ENCODE measurements at regions of chr1 and their contacts with region 1.

Region 1: GRCh38 chr1:207885129-207886032 is 25.5 kb downstream of the CD34 start:
- DNase-seq: peak; percentile 82
- ATAC-seq: peak; percentile 87
- H3K4me3 ChIP-seq: no peak overlapping the region
- H3K4me3 Mint-ChIP-seq: peak overlapping the region; percentile 36
- H3K27ac ChIP-seq: no peak overlapping the region
- H3K27ac Mint-ChIP-seq: no peak overlapping the region
- H3K4me1 ChIP-seq: peaks cover 15 to 26% of the 10 kb centered on the region in 2 donors
- H3K4me1 Mint-ChIP-seq: peaks cover 35% of the 10 kb centered on the region
- H3K27me3 ChIP-seq: no peaks in the 10 kb centered on the region
- H3K27me3 Mint-ChIP-seq: peaks cover 12% of the 10 kb centered on the region
- CTCF ChIP-seq: peak; percentile 95

Region 2: DNA sequence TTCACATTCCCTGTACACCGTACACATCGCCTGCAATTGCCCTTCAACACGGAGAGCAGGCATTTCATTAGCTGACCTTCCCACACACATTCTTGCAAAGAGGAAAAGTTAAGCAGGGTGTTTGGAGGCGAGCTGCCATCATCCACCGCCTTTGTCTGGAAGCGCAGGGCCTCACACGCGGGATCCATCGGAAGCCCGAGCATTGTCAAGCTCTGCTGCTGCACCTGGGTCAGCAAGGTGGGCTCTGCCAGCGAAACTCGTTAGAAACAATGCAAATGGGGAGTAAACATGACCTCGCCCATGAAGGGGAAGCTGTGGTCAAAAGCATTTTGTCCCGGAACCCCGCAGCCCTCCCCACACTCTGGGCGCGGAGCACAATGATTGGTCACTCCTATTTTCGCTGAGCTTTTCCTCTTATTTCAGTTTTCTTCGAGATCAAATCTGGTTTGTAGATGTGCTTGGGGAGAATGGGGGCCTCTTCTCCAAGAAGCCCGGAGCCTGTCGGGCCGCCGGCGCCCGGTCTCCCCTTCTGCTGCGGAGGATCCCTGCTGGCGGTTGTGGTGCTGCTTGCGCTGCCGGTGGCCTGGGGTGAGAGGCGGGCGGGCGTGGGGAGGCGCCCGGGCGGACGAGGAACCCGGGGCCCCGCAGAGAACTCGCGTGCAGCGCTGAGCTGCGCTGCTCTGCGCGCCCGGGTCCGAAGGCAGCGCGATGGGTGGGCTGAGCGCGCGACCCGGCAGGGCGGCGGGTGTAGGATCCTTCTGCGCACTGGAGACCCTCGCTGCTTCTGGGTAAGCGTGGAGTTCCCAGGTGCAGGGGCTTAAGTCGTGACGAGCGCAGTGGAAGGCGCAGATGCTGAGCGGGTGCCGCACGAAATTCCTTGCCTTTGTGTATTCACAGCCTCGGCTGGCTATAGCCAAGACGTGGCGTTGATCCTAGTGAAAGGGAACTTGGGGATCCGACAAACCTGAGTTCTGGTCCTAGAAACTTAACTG is 389.3 kb before region 1 on chr1 and contains the start of gene CR1:
- CTCF ChIA-PET with region 1: no interaction called
- POLR2A ChIA-PET with region 1: no interaction called
- intact Hi-C with region 1: no loop called
- DNase-seq: peak; percentile 77
- ATAC-seq: peak; percentile 70
- H3K4me3 ChIP-seq: peak within 1 kb of the TSS; percentile 64 to 87 (median 73)
- H3K4me3 Mint-ChIP-seq: peak within 1 kb of the TSS; percentile 98
- H3K27ac ChIP-seq: peak within 1 kb of the TSS; percentile 56 to 62
- H3K27ac Mint-ChIP-seq: peak within 1 kb of the TSS; percentile 96
- H3K4me1 ChIP-seq: peaks cover 41 to 49% of the 10 kb centered on the region in 2 donors
- H3K4me1 Mint-ChIP-seq: peaks cover 41% of the 10 kb centered on the region
- H3K27me3 ChIP-seq: no peaks in the 10 kb centered on the region
- H3K27me3 Mint-ChIP-seq: no peaks in the 10 kb centered on the region
- CTCF ChIP-seq: no peak
- total RNA-seq, gene CR1: 36.7 and 40.0 TPM in 2 replicates

Region 3: GRCh38 chr1:207797229-207797961 is 88.0 kb before region 1 on chr1:
- CTCF ChIA-PET with region 1: interaction called, 15 read pairs
- POLR2A ChIA-PET with region 1: no interaction called
- intact Hi-C with region 1: no loop called
- DNase-seq: peak; percentile 75
- ATAC-seq: peak; percentile 80
- H3K4me3 ChIP-seq: no peak overlapping the region
- H3K4me3 Mint-ChIP-seq: no peak overlapping the region
- H3K27ac ChIP-seq: no peak overlapping the region
- H3K27ac Mint-ChIP-seq: no peak overlapping the region
- H3K4me1 ChIP-seq: peaks cover 16 to 22% of the 10 kb centered on the region in 2 donors
- H3K4me1 Mint-ChIP-seq: peaks cover 33% of the 10 kb centered on the region
- H3K27me3 ChIP-seq: no peaks in the 10 kb centered on the region
- H3K27me3 Mint-ChIP-seq: no peaks in the 10 kb centered on the region
- CTCF ChIP-seq: peak; percentile 83

Region 4: DNA sequence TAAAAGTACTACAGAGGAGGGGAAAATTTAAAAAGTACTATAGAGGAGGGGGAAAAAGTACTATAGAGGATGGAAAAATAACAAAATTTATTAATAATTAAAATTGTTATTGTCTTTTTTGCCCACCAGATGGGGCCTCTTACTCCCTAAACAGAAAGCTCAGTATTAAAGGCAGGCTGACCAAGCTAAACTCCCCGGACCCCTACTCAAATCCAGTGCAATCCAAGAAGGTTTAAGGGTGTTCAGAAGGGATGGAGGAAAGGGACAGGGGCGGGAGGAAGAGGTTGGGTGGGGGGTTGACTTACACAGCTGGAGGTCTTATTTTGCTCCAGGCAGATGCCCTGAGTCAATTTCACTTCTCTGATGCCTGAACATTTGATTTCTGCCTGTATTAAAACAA is 11.8 kb after region 1 on chr1:
- CTCF ChIA-PET with region 1: interaction called, 26 read pairs
- POLR2A ChIA-PET with region 1: no interaction called
- intact Hi-C with region 1: no loop called
- DNase-seq: no peak
- ATAC-seq: no peak
- H3K4me3 ChIP-seq: no peak overlapping the region
- H3K4me3 Mint-ChIP-seq: no peak overlapping the region
- H3K27ac ChIP-seq: no peak overlapping the region
- H3K27ac Mint-ChIP-seq: no peak overlapping the region
- H3K4me1 ChIP-seq: no peaks in the 10 kb centered on the region
- H3K4me1 Mint-ChIP-seq: peaks cover 7% of the 10 kb centered on the region
- H3K27me3 ChIP-seq: peaks cover 0 to 3% (median 0%) of the 10 kb centered on the region in 4 experiments
- H3K27me3 Mint-ChIP-seq: peaks cover 3% of the 10 kb centered on the region
- CTCF ChIP-seq: peak; percentile 45

Region 5: GRCh38 chr1:207938016-207938415 is 52.6 kb after region 1 on chr1:
- CTCF ChIA-PET with region 1: interaction called, 14 read pairs
- POLR2A ChIA-PET with region 1: no interaction called
- intact Hi-C with region 1: no loop called
- DNase-seq: no peak
- ATAC-seq: no peak
- H3K4me3 ChIP-seq: no peak overlapping the region
- H3K4me3 Mint-ChIP-seq: no peak overlapping the region
- H3K27ac ChIP-seq: no peak overlapping the region
- H3K27ac Mint-ChIP-seq: no peak overlapping the region
- H3K4me1 ChIP-seq: no peaks in the 10 kb centered on the region
- H3K4me1 Mint-ChIP-seq: peaks cover 11% of the 10 kb centered on the region
- H3K27me3 ChIP-seq: peaks cover 0 to 11% (median 3%) of the 10 kb centered on the region in 4 experiments
- H3K27me3 Mint-ChIP-seq: peaks cover 11% of the 10 kb centered on the region
- CTCF ChIP-seq: no peak

Region 6: GRCh38 chr1:207997486-207998268 is 112.3 kb after region 1 on chr1:
- CTCF ChIA-PET with region 1: interaction called, 12 read pairs
- POLR2A ChIA-PET with region 1: no interaction called
- intact Hi-C with region 1: no loop called
- DNase-seq: peak; percentile 53
- ATAC-seq: peak; percentile 60
- H3K4me3 ChIP-seq: no peak overlapping the region
- H3K4me3 Mint-ChIP-seq: no peak overlapping the region
- H3K27ac ChIP-seq: no peak overlapping the region
- H3K27ac Mint-ChIP-seq: no peak overlapping the region
- H3K4me1 ChIP-seq: no peaks in the 10 kb centered on the region
- H3K4me1 Mint-ChIP-seq: no peaks in the 10 kb centered on the region
- H3K27me3 ChIP-seq: no peaks in the 10 kb centered on the region
- H3K27me3 Mint-ChIP-seq: peaks cover 17% of the 10 kb centered on the region
- CTCF ChIP-seq: peak; percentile 78

Region 7: DNA sequence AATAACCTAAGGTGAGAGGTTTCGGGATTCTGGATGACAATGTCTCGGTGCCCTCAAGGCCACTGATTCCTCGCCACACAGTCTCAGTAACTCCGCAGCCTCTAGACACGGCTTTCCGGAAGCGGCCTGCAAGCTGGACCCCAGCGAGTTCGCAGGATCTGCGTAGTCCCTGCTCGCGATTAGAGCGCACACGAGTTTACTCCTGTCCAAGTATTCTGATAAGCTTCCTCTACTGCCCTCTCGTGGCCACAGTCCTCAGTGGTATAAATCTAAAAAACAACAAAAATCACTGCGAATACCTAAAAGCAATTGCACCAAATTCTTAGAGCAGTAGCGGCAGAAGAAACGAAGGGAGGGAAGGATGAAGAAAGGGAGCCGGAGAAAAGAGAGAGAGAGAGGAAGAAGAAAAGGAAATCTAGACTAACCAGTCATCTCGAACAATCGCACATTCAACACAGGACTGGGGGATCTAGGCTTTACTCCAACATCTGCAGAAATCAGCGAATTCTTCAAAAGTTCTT is 359.9 kb after region 1 on chr1:
- CTCF ChIA-PET with region 1: interaction called, 8 read pairs
- POLR2A ChIA-PET with region 1: no interaction called
- intact Hi-C with region 1: loop called (anchors 10 kb)
- DNase-seq: peak; percentile 85
- ATAC-seq: peak; percentile 56
- H3K4me3 ChIP-seq: peak overlapping the region; percentile 49 to 93 (median 81)
- H3K4me3 Mint-ChIP-seq: peak overlapping the region; percentile 80
- H3K27ac ChIP-seq: peak overlapping the region; percentile 8 to 73
- H3K27ac Mint-ChIP-seq: peak overlapping the region; percentile 62
- H3K4me1 ChIP-seq: peaks cover 8 to 14% of the 10 kb centered on the region in 2 donors
- H3K4me1 Mint-ChIP-seq: peaks cover 11% of the 10 kb centered on the region
- H3K27me3 ChIP-seq: peaks cover 0 to 28% (median 9%) of the 10 kb centered on the region in 4 experiments
- H3K27me3 Mint-ChIP-seq: peaks cover 7% of the 10 kb centered on the region
- CTCF ChIP-seq: peak; percentile 85

Measured in B cell (primary cell).